ENCODE measurements at regions of chr12 and their contacts with region 1.

Region 1: DNA sequence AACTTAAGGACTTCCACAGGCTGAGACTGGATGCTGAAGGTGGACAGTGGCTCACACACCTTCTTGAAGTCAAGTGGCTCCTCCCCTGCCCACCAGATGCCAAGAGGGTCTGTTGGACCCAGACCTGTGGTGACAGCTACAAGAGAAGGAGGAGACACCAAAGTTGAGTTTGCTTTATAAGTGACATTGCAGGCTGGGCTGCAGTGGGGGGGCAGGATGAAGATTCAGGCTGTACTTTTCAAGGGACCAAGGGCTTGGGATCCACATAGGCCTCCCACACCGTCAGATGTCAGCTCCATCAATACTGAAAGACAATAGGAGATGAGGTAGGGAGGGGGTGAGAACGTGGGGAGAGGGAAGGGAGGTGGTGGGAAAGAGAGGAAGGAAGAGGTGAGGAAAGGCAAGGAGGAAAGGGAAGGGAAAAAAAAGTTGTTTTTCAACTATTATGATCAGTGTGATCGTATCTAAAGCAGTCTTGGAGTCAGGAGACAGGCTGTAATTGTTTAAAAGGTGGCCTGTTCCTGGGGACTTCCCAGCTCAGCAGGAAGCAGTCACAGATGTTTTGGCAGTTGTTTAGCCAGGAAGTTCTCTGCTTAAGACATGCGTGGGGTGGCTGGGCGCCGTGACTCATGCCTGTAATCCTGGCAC is 84.1 kb upstream of the RESF1 start:
- DNase-seq: peak; percentile 62 to 88 (median 73)
- H3K4me3 ChIP-seq: peak overlapping the region in 1 of 2 donors; percentile 9
- H3K4me3 Mint-ChIP-seq: peak overlapping the region in 7 of 8 donors; percentile 27 to 81 (median 75)
- H3K27ac ChIP-seq: peak overlapping the region; percentile 77
- H3K27ac Mint-ChIP-seq: peak overlapping the region; percentile 95 to 99 (median 98)
- H3K4me1 ChIP-seq: peaks cover 33% of the 10 kb centered on the region
- H3K4me1 Mint-ChIP-seq: peaks cover 31 to 64% (median 49%) of the 10 kb centered on the region in 4 donors
- H3K27me3 ChIP-seq: no peaks in the 10 kb centered on the region
- H3K27me3 Mint-ChIP-seq: no peaks in the 10 kb centered on the region

Region 2: DNA sequence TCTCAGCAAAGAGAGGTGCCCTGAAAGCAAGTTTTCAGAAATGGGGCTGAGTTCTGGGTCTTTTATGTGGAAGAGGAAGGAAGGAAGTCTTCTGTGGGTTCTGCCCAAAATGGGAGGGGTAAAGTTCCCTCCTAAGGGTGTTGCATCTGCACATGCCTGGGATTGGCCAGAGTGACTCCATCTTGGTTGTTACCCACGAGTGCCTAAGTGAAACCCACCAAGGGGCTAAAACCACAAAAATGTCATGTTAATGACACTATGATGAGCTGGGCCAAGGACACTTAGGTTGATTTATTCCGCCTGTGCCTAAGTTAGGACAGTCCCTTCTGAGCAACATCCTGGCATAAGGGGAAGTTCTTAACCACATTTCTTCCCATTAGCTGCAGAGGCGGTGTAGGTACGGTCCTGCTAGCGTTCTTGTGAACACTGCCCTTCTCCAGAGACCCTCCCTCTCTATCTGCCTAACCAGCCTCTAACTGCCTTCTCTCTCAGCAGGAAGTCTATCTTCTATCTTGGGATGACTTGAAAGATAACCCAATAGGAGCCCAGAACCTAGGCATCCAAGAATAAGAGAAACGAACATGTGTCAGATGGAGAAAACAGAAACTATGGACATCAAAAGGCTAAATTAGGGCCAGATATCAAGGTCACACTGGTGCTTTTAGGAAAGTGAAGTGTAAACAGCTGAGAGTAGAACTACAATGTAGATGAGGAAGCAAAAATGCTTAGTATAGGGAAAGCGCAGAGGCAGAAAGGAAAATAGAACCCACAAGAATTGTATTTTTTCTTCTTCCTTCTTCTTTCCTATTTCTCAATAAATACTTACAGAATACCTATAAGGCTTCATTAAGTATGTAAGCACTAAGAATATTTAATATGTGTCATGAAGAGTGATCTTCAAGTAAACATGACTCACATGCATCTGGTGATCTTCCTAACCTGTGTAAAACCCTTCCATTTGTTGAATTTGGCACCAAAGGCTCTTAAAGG is 42.0 kb before region 1 on chr12:
- CTCF ChIA-PET with region 1: no interaction called
- POLR2A ChIA-PET with region 1: interaction called, 3 read pairs
- intact Hi-C with region 1: loop called (anchors 5 kb)
- DNase-seq: peak; percentile 48 to 73 (median 67)
- H3K4me3 ChIP-seq: peak overlapping the region; percentile 7 to 21
- H3K4me3 Mint-ChIP-seq: peak overlapping the region in 7 of 8 donors; percentile 62 to 81 (median 70)
- H3K27ac ChIP-seq: no peak overlapping the region
- H3K27ac Mint-ChIP-seq: peak overlapping the region; percentile 57 to 90 (median 83)
- H3K4me1 ChIP-seq: peaks cover 43% of the 10 kb centered on the region
- H3K4me1 Mint-ChIP-seq: peaks cover 34 to 56% (median 47%) of the 10 kb centered on the region in 4 donors
- H3K27me3 ChIP-seq: no peaks in the 10 kb centered on the region
- H3K27me3 Mint-ChIP-seq: no peaks in the 10 kb centered on the region

Measured in CD4-positive, alpha-beta memory T cell (primary cell).